ENCODE measurements at regions of chr13 and their contacts with region 1.

Region 1: GRCh38 chr13:28792992-28793391 is 27.1 kb upstream of the MTUS2 start:
- DNase-seq: no peak
- ATAC-seq: no peak
- H3K4me3 ChIP-seq: no peak overlapping the region
- H3K4me3 Mint-ChIP-seq: no peak overlapping the region
- H3K27ac ChIP-seq: no peak overlapping the region
- H3K27ac Mint-ChIP-seq: no peak overlapping the region
- H3K4me1 ChIP-seq: no peaks in the 10 kb centered on the region
- H3K4me1 Mint-ChIP-seq: no peaks in the 10 kb centered on the region
- H3K27me3 ChIP-seq: peaks cover 0 to 3% of the 10 kb centered on the region in 2 experiments
- H3K27me3 Mint-ChIP-seq: peaks cover 36% of the 10 kb centered on the region
- CTCF ChIP-seq: no peak

Region 2: DNA sequence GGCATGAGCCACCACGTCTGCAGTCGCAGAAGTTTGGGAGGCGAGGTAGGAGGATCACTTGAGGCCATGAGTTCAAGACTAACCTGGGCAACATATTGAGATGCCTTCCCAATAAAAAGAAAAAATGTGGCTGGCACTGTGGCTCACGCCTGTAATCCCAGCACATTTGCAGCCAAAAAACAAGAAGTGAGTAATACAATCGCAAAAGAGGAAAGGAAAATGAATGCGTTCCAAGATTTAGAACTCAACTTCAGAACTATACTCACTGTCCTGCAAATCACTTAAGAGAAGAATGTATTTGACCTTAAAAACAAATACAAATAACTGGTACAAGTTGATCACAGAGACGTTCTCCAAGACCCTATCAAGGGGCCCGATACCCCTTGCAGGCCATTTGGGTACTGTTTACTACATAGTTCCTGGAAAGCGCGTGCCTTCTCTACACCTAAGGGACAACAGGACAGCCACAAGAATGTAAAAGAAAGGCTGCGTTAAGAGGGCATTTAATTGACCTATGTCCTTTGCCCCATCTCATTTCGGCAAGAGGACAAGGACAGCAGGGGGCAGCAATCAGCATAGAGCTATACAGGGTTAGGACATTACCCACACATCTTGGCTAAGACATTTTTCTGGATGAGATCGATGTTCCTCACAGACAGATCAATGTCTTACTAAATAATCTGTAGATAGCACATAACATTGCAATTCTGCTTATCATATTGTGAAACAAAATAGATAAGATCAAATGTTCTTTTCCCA is 733.9 kb before region 1 on chr13:
- CTCF ChIA-PET with region 1: no interaction called
- POLR2A ChIA-PET with region 1: no interaction called
- intact Hi-C with region 1: loop called in 1 of 2 experiments (anchors 1 kb)
- DNase-seq: peak in 8 of 9 experiments; percentile 15 to 55 (median 40)
- ATAC-seq: no peak
- H3K4me3 ChIP-seq: no peak overlapping the region
- H3K4me3 Mint-ChIP-seq: no peak overlapping the region
- H3K27ac ChIP-seq: no peak overlapping the region
- H3K27ac Mint-ChIP-seq: no peak overlapping the region
- H3K4me1 ChIP-seq: no peaks in the 10 kb centered on the region
- H3K4me1 Mint-ChIP-seq: no peaks in the 10 kb centered on the region
- H3K27me3 ChIP-seq: no peaks in the 10 kb centered on the region
- H3K27me3 Mint-ChIP-seq: peaks cover 18% of the 10 kb centered on the region
- CTCF ChIP-seq: peak; percentile 21

Region 3: GRCh38 chr13:28679628-28680027 is 113.4 kb before region 1 on chr13:
- CTCF ChIA-PET with region 1: interaction called, 5 read pairs
- POLR2A ChIA-PET with region 1: no interaction called
- intact Hi-C with region 1: loop called (anchors 2 to 5 kb)
- DNase-seq: no peak
- ATAC-seq: no peak
- H3K4me3 ChIP-seq: no peak overlapping the region
- H3K4me3 Mint-ChIP-seq: no peak overlapping the region
- H3K27ac ChIP-seq: no peak overlapping the region
- H3K27ac Mint-ChIP-seq: no peak overlapping the region
- H3K4me1 ChIP-seq: no peaks in the 10 kb centered on the region
- H3K4me1 Mint-ChIP-seq: peaks cover 4% of the 10 kb centered on the region
- H3K27me3 ChIP-seq: no peaks in the 10 kb centered on the region
- H3K27me3 Mint-ChIP-seq: no peaks in the 10 kb centered on the region
- CTCF ChIP-seq: peak; percentile 14